ENCODE measurements at regions of chr1 and their contacts with region 1.

Region 1: GRCh38 chr1:156860113-156860627 is 495 bp upstream of the NTRK1 start:
- DNase-seq: peak in 1 of 2 experiments; percentile 60
- H3K4me3 ChIP-seq: peak overlapping the region; percentile 27
- H3K4me3 Mint-ChIP-seq: peak overlapping the region; percentile 74
- H3K27ac Mint-ChIP-seq: no peak overlapping the region
- H3K4me1 ChIP-seq: peaks cover 33% of the 10 kb centered on the region
- H3K4me1 Mint-ChIP-seq: peaks cover 25% of the 10 kb centered on the region
- H3K27me3 ChIP-seq: peaks cover 7% of the 10 kb centered on the region
- H3K27me3 Mint-ChIP-seq: peaks cover 11% of the 10 kb centered on the region
- CTCF ChIP-seq: peak; percentile 88 to 90

Region 2: DNA sequence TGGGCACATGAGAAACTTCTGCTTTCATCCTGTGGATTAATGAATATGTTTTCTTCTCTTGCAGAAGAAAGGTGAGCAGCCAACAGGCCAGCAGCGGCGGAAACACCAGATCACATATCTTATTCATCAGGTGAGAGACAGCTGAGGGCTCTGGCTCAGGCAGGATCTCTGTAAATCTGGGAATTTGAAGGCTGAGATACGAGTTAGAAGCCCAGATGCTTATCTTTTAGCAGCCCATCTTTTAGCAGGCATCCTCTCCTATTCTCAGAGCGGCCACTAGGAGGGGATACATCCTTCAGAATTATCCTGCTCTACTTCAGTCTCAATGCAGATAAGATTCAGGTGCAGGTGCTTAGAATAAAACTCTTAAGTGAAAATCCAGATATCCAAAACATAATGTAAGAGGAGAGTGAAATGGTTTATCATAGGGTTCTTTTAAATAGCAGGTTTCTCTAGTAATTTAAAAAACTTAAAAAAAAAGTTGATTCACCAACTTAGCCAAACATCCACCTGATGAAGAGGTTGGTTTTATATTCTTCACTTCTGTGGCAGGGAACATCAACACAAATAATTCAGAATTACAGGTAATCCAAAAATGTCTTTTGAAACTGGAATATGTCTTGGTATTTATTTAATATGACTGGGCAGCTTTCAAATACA is 62.8 kb before region 1 on chr1:
- CTCF ChIA-PET with region 1: interaction called, 10 read pairs
- POLR2A ChIA-PET with region 1: no interaction called
- intact Hi-C with region 1: loop called (anchors 1 kb)
- DNase-seq: peak; percentile 53 to 68
- H3K4me3 ChIP-seq: no peak overlapping the region
- H3K4me3 Mint-ChIP-seq: no peak overlapping the region
- H3K27ac Mint-ChIP-seq: no peak overlapping the region
- H3K4me1 ChIP-seq: no peaks in the 10 kb centered on the region
- H3K4me1 Mint-ChIP-seq: no peaks in the 10 kb centered on the region
- H3K27me3 ChIP-seq: no peaks in the 10 kb centered on the region
- H3K27me3 Mint-ChIP-seq: no peaks in the 10 kb centered on the region
- CTCF ChIP-seq: peak; percentile 72 to 81

Region 3: DNA sequence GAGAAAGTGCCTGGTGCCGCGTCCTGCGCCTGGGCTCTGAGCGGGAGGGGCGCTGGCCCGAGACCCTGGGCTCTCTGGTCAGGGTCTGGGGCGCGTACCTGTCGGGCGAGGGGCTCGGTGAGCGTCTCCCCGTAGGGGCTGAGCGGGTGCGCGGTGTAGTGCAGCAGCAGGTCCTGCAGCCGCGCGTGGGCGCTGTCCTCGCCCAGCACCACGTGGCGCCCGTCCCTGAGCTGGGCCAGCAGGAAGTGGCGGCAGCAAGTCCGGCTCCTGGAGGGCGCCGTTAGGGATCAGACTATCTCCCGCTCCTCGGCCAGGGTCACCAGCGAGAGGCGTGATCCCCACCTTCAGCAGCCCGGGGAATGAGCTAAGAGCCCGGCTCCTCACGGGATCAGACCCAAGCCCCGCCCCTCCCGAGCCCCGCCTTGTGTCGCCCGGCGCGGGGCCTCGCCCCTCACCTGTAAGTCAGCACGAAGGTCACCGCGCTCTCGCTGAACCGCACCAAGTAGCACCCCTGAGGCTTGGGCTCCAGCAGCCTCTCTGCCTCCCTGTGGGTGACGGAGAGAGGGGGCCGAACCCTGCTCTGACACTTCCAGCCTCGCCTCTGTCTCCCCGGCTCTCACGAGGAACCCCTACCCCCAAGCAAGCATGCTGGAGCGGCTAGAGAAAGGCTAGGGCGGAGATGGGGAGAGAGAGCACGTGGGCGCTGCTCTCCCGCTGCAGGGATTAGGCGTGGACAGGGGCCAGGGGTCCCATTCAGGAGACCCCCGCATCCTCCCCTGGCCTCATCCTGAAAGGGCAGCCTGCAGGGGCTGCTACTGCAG is 46.2 kb before region 1 on chr1:
- CTCF ChIA-PET with region 1: interaction called, 35 read pairs
- POLR2A ChIA-PET with region 1: interaction called, 5 read pairs
- intact Hi-C with region 1: loop called (anchors 2 kb)
- DNase-seq: peak; percentile 81 to 85
- H3K4me3 ChIP-seq: peak overlapping the region; percentile 55
- H3K4me3 Mint-ChIP-seq: peak overlapping the region; percentile 74
- H3K27ac Mint-ChIP-seq: peak overlapping the region; percentile 53
- H3K4me1 ChIP-seq: peaks cover 11% of the 10 kb centered on the region; the same call in 1 of the 2 replicates
- H3K4me1 Mint-ChIP-seq: no peaks in the 10 kb centered on the region
- H3K27me3 ChIP-seq: no peaks in the 10 kb centered on the region
- H3K27me3 Mint-ChIP-seq: no peaks in the 10 kb centered on the region
- CTCF ChIP-seq: peak; percentile 50 to 87

Region 4: GRCh38 chr1:156838981-156839410 is 21.2 kb before region 1 on chr1:
- CTCF ChIA-PET with region 1: interaction called, 35 read pairs
- POLR2A ChIA-PET with region 1: no interaction called
- intact Hi-C with region 1: loop called (anchors 2 kb)
- DNase-seq: peak in 1 of 2 experiments; percentile 49
- H3K4me3 ChIP-seq: no peak overlapping the region
- H3K4me3 Mint-ChIP-seq: no peak overlapping the region
- H3K27ac Mint-ChIP-seq: no peak overlapping the region
- H3K4me1 ChIP-seq: no peaks in the 10 kb centered on the region
- H3K4me1 Mint-ChIP-seq: no peaks in the 10 kb centered on the region
- H3K27me3 ChIP-seq: no peaks in the 10 kb centered on the region; the same call in 1 of the 2 replicates
- H3K27me3 Mint-ChIP-seq: peaks cover 30% of the 10 kb centered on the region
- CTCF ChIP-seq: peak; percentile 70 to 93

Region 5: DNA sequence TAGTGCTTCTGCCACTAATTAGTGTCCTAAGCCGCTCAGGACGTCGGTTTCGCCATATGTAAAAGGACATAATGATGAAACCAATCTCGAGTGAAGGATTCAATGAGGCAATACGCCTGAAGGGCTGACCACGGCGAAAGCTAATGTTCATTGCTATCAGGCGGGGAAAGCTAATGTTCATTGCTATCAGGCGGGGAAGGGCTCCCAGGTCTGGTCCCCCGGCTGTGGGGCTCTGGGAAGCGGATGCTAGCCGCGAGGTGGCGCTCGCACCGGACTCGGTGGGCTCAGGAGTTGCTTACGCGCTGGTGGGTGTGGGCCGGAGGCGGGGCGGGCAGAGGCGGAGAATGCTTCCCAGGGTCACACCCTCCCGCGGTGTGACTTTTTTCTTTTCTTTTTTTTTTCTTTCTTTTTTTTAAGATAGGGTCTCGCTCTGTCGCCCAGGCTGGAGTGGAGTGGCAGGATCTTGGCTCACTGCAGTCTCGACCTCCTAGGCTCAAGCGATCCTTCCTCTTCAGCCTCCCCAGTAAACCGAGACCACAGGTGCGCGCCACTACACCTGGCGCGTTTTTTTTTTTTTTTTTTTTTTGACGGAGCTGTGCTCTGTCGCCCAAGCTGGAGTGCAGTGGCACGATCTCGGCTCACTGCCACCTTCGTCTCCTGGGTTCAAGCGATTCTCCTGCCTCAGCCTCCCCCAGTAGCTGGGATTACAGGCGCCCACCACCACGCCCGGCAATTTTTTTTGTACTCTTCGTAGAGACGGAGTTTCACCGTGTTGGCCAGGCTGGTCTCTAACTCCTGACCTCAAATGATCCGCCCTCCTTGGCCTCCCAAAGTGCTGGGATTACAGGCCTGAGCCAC is 32.2 kb after region 1 on chr1:
- CTCF ChIA-PET with region 1: interaction called, 5 read pairs
- POLR2A ChIA-PET with region 1: no interaction called
- intact Hi-C with region 1: loop called (anchors 1 kb)
- DNase-seq: peak; percentile 91 to 95
- H3K4me3 ChIP-seq: no peak overlapping the region; the same call in 1 of the 2 replicates
- H3K4me3 Mint-ChIP-seq: peak overlapping the region; percentile 59
- H3K27ac Mint-ChIP-seq: no peak overlapping the region
- H3K4me1 ChIP-seq: peaks cover 38% of the 10 kb centered on the region
- H3K4me1 Mint-ChIP-seq: peaks cover 23% of the 10 kb centered on the region
- H3K27me3 ChIP-seq: no peaks in the 10 kb centered on the region
- H3K27me3 Mint-ChIP-seq: peaks cover 12% of the 10 kb centered on the region
- CTCF ChIP-seq: peak; percentile 83 to 89

Region 6: GRCh38 chr1:157133426-157133825 is 273.3 kb after region 1 on chr1:
- CTCF ChIA-PET with region 1: no interaction called
- POLR2A ChIA-PET with region 1: no interaction called
- intact Hi-C with region 1: no loop called
- DNase-seq: no peak
- H3K4me3 ChIP-seq: no peak overlapping the region
- H3K4me3 Mint-ChIP-seq: no peak overlapping the region
- H3K27ac Mint-ChIP-seq: no peak overlapping the region
- H3K4me1 ChIP-seq: peaks cover 63% of the 10 kb centered on the region
- H3K4me1 Mint-ChIP-seq: peaks cover 43% of the 10 kb centered on the region
- H3K27me3 ChIP-seq: no peaks in the 10 kb centered on the region
- H3K27me3 Mint-ChIP-seq: no peaks in the 10 kb centered on the region
- CTCF ChIP-seq: no peak

Measured in Caco-2 (cell line).